Heart right ventricle (tissue), 16 donors: ENCODE measurements at regions of chr2 and their contacts with region 1.

Region 1: GRCh38 chr2:237858294-237859081 is 935 bp upstream of the RAMP1 start:
- DNase-seq: peak; percentile 47 to 70
- ATAC-seq: peak; percentile 62 to 84 (median 82)
- H3K4me3 ChIP-seq: peak overlapping the region in 5 of 10 donors; percentile 21 to 66 (median 59)
- H3K27ac ChIP-seq: peak overlapping the region in 9 of 10 donors; percentile 81 to 94 (median 89)
- H3K4me1 ChIP-seq: peaks cover 0 to 32% (median 8%) of the 10 kb centered on the region in 9 donors
- H3K27me3 ChIP-seq: peaks cover 0 to 49% (median 31%) of the 10 kb centered on the region in 7 donors
- CTCF ChIP-seq: peak; percentile 40 to 85 (median 73)

Region 2: DNA sequence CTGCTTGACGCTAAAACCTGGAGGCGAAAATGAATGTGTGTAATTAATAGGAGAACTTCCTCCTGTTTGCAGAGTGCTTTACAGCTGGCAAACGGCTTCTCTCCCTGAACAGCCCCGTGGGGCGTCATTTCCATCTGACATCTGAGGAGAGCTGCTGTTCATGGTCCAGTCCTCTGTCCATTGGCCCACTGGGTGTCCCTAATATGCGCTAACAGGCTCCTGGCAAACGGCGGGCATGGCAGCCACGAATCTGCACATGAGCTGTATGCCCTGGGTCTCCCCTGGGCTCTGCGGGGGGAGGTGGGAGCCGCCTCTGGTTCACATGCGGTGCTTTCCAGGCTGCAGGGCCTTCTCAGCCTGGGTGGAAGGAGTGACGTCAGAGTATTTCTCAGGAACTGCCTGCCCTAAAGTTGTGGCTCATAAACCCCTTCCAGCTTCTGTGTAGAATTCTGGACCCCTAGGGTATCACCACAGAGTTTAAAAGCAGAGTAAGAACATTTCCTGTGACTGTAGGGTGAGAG is 157.9 kb before region 1 on chr2:
- intact Hi-C with region 1: no loop called
- DNase-seq: peak; percentile 66 to 84
- ATAC-seq: peak; percentile 52 to 77 (median 71)
- H3K4me3 ChIP-seq: peak overlapping the region in 3 of 10 donors; percentile 3 to 17 (median 12)
- H3K27ac ChIP-seq: peak overlapping the region; percentile 42 to 92 (median 84)
- H3K4me1 ChIP-seq: peaks cover 65 to 100% (median 100%) of the 10 kb centered on the region in 9 donors
- H3K27me3 ChIP-seq: no peaks in the 10 kb centered on the region
- CTCF ChIP-seq: peak in 1 of 9 donors; percentile 29

Region 3: DNA sequence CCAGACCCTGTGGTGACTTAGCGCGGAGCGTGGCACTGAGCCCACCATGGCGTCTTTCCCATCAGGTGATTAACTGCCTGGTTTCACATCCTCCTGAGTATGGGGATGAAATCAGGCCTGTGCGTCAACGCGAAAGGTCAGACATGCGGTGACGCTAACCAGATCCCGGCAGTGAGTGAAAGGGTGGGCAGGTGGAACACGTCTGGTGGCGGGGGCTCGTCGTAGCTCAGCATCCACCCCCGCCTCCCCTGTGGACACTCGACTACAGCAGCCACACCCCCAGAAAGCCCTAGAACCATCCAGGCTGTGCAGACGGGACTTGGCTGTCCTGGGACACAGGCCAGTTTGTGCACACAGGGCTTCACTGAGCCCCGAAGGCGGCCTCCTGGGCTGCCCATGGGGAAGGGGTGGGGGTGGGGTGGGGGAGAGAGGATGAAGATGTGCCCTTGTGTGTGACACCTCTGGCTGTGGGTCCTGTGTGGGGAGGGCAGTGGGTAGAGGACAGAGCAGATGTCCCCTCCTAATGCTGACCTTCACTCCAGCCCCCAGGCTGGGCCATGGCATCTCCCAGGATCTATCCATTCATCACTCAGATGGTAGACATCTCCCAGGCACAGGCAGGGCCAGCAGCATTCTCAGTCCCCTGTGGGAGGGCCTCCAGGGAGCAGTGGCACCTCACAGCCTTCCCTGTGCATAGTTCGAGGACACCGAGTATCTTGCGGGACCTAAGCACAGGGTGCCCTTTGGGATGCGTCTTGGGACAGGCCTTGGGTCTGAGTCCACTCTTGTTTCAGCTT is 28.4 kb after region 1 on chr2:
- intact Hi-C with region 1: loop called in 1 of 10 experiments (anchors 2 kb)
- DNase-seq: peak; percentile 78 to 85
- ATAC-seq: peak; percentile 71 to 92 (median 87)
- H3K4me3 ChIP-seq: no peak overlapping the region
- H3K27ac ChIP-seq: peak overlapping the region; percentile 80 to 97 (median 90)
- H3K4me1 ChIP-seq: peaks cover 10 to 49% (median 33%) of the 10 kb centered on the region in 9 donors
- H3K27me3 ChIP-seq: no peaks in the 10 kb centered on the region
- CTCF ChIP-seq: no peak

Region 4: DNA sequence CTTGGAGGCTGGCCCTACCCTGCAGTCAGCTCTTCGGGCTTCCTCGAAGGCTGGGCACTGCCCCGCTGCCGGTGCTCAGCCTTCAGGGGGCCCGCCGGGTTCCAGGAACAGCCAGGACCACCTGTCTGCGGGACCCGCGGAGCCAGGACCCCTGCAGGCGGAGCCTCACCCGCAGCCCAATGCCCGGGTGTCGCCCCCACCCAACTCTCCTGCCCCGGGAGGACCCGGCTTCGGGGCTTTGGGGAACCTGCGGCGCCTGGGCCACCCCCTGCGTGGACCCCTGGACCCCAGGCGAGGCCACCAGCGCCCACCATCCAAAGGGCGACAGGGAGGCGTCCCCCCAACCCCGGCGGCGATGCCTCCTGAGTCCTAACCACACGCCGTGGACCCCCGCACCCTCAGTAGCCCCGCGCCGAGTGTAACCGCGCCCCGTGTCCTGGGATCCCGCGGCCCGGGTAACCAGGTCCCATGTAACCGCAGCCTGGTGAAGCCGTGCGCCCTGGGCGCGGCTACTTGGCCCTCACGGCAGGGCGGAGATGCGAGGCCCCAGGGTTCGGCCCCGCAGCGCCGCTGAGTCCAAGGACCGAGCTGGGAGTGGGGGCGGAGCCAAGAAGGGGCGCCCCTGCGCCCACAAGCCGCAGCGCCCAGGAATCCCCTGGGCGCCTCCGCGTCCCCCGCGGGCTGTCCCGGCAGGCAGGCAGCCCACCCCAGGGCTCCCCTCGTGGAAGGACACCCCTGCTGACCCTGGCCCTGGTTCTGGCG is 97.3 kb after region 1 on chr2:
- intact Hi-C with region 1: loop called in 3 of 10 experiments (anchors 10 kb)
- DNase-seq: no peak
- ATAC-seq: peak in 5 of 8 donors; percentile 20 to 56 (median 37)
- H3K4me3 ChIP-seq: peak overlapping the region; percentile 14 to 51 (median 40)
- H3K27ac ChIP-seq: no peak overlapping the region
- H3K4me1 ChIP-seq: peaks cover 0 to 11% (median 7%) of the 10 kb centered on the region in 9 donors
- H3K27me3 ChIP-seq: peaks cover 0 to 36% (median 26%) of the 10 kb centered on the region in 7 donors
- CTCF ChIP-seq: no peak

Region 5: GRCh38 chr2:237978058-237978712 is 119.7 kb after region 1 on chr2:
- intact Hi-C with region 1: loop called in 2 of 10 experiments (anchors 10 kb)
- DNase-seq: peak; percentile 21 to 51
- ATAC-seq: peak; percentile 21 to 67 (median 42)
- H3K4me3 ChIP-seq: no peak overlapping the region
- H3K27ac ChIP-seq: no peak overlapping the region
- H3K4me1 ChIP-seq: peaks cover 0 to 64% (median 48%) of the 10 kb centered on the region in 9 donors
- H3K27me3 ChIP-seq: no peaks in the 10 kb centered on the region
- CTCF ChIP-seq: no peak

Region 6: GRCh38 chr2:238060542-238061314 is 202.2 kb after region 1 on chr2 and contains the start of gene SCLY:
- intact Hi-C with region 1: loop called in 1 of 10 experiments (anchors 10 kb)
- DNase-seq: peak; percentile 97 to 98
- ATAC-seq: peak; percentile 99 to 100 (median 100)
- H3K4me3 ChIP-seq: peak within 1 kb of the TSS; percentile 70 to 95 (median 81)
- H3K27ac ChIP-seq: peak within 1 kb of the TSS; percentile 69 to 96 (median 88)
- H3K4me1 ChIP-seq: peaks cover 2 to 25% (median 17%) of the 10 kb centered on the region in 9 donors
- H3K27me3 ChIP-seq: no peaks in the 10 kb centered on the region
- CTCF ChIP-seq: no peak
- total RNA-seq, gene SCLY: 8.3 to 14.5 (median 11.4) TPM

Region 7: DNA sequence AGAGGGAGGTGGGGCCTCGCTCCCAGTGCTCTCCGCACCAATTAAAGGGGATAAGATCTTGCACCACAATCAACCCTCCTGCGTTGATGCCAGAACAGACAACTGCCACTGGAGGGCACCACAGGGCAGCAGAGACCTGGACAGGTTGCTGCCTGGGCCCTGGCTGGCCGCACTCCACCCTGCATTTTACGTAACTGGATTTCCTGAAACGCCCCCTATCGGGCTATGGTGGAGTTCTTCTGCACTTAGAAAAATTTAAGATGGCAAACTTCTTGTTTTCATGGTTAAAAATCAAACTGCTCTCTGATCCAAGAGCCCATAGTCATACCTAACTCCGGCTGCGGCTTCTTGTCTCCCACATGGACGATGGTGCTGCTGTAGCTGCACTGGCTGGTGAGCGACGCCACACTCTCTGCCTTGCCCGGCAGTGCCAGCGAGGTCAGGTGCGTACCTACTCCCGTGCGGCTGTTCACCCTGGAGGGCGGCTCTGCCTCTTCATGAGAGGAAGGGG is 398.2 kb after region 1 on chr2:
- intact Hi-C with region 1: loop called in 5 of 10 experiments (anchors 5 to 10 kb)
- DNase-seq: peak; percentile 57 to 62
- ATAC-seq: peak in 7 of 8 donors; percentile 35 to 66 (median 53)
- H3K4me3 ChIP-seq: no peak overlapping the region
- H3K27ac ChIP-seq: no peak overlapping the region
- H3K4me1 ChIP-seq: peaks cover 0 to 13% (median 7%) of the 10 kb centered on the region in 9 donors
- H3K27me3 ChIP-seq: no peaks in the 10 kb centered on the region
- CTCF ChIP-seq: peak; percentile 53 to 80 (median 72)

Region 8: DNA sequence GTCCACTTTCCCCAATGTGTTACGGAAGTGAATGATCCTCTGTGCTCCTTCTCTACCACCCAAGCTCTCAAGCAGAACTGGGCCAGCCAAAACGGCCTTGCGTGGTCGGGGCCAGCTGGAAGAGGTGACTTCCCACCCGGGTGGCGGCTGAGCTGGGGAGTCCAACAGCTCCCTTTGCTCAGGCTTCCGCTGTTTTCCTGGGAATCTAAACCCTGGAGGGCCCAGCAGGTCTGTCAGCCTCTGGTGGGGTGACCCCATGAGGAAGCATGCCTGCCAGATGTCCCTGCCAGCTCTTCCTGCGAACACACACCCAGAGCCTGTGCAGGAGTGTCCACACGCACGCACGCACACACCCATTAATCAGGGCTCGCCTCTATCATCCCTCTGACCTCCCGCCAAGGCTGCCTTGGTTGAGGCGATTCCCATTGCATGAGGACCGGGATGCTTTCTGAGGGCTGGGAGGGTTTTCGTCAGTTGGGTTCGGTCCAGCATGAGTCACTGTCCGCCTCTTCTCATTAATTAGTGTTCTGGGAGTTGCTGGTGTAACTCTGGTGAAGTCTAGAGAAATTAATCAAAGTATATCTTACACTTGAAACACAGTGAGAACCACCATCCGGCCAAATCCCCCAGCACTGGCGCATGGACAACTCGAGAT is 1080.0 kb after region 1 on chr2:
- intact Hi-C with region 1: no loop called
- DNase-seq: peak; percentile 71 to 76
- ATAC-seq: peak; percentile 78 to 91 (median 84)
- H3K4me3 ChIP-seq: no peak overlapping the region
- H3K27ac ChIP-seq: peak overlapping the region in 5 of 10 donors; percentile 22 to 48 (median 26)
- H3K4me1 ChIP-seq: peaks cover 0 to 8% (median 0%) of the 10 kb centered on the region in 9 donors
- H3K27me3 ChIP-seq: peaks cover 0 to 15% (median 0%) of the 10 kb centered on the region in 7 donors
- CTCF ChIP-seq: no peak